HepG2 (cell line): ENCODE measurements at regions of chr7 and their contacts with region 1.

Region 1: GRCh38 chr7:130063036-130063435 is 7.3 kb upstream of the KLHDC10 start:
- DNase-seq: peak; percentile 50
- ATAC-seq: peak; percentile 43
- H3K4me3 ChIP-seq: no peak overlapping the region
- H3K27ac ChIP-seq: no peak overlapping the region
- H3K4me1 ChIP-seq: peaks cover 53% of the 10 kb centered on the region
- H3K27me3 ChIP-seq: no peaks in the 10 kb centered on the region
- CTCF ChIP-seq: peak; percentile 65
- EP300 ChIP-seq: no peak
- POLR2A ChIP-seq: no peak
- RAD21 ChIP-seq: peak; percentile 47

Region 2: DNA sequence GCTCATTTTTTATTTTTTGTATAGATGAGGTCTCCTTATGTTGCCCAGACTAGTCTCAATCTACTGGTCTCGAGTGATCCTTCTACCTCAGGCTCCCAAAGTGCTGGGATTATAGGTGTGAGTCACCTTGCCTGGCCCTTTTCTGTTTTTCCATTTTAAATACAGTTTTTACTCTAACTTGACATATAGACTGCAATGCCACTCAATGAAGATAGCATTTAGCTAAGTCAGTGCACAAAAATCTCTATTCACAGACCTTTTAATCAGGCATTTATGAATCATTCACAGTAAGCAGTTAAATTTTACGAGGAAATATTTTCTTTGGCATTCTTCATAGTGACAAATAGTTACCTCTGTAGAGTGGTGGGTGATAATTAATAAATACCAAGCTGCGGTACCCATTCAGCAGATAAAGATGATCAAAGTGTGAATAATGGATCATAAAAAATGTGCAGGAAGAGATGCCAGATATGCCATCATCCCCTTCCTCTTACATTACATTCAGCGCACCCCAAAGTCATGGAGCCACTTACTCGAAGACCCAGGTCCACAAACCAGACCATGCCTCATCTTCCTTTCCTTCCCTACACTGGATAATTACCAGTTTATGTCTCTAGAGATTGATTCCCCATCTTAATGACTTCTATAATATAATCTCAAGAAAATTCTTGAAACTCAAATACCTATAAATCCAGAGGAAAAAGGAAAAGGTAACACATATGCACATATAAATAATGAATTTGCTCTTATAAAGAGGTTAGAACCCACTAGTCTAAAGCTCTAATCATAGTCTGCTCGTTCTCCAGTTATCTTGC is 166.3 kb before region 1 on chr7:
- CTCF ChIA-PET with region 1: no interaction called
- POLR2A ChIA-PET with region 1: no interaction called
- in situ Hi-C with region 1: no loop called
- intact Hi-C with region 1: no loop called
- DNase-seq: no peak
- ATAC-seq: no peak
- H3K4me3 ChIP-seq: no peak overlapping the region
- H3K27ac ChIP-seq: no peak overlapping the region
- H3K4me1 ChIP-seq: no peaks in the 10 kb centered on the region
- H3K27me3 ChIP-seq: no peaks in the 10 kb centered on the region
- CTCF ChIP-seq: no peak
- EP300 ChIP-seq: no peak
- POLR2A ChIP-seq: no peak
- RAD21 ChIP-seq: no peak

Region 3: GRCh38 chr7:130205084-130205947 is 142.3 kb after region 1 on chr7 and contains the start of gene TMEM209:
- CTCF ChIA-PET with region 1: no interaction called
- POLR2A ChIA-PET with region 1: interaction called, 10 read pairs
- in situ Hi-C with region 1: no loop called
- intact Hi-C with region 1: no loop called
- DNase-seq: peak; percentile 96
- ATAC-seq: peak; percentile 96
- H3K4me3 ChIP-seq: peak within 1 kb of the TSS; percentile 83 to 94 (median 92)
- H3K27ac ChIP-seq: peak within 1 kb of the TSS; percentile 97
- H3K4me1 ChIP-seq: peaks cover 25% of the 10 kb centered on the region
- H3K27me3 ChIP-seq: no peaks in the 10 kb centered on the region; a peak in 1 of 5 replicates
- CTCF ChIP-seq: no peak
- EP300 ChIP-seq: peak in 1 of 2 experiments; percentile 15; a peak in 1 of 4 replicates
- POLR2A ChIP-seq: peak; percentile 92 to 95
- RAD21 ChIP-seq: no peak
- total RNA-seq, gene TMEM209: 8.8 and 14.5 TPM in 2 replicates

Region 4: GRCh38 chr7:130227883-130228575 is 165.0 kb after region 1 on chr7:
- CTCF ChIA-PET with region 1: no interaction called
- POLR2A ChIA-PET with region 1: no interaction called
- in situ Hi-C with region 1: no loop called
- intact Hi-C with region 1: no loop called
- DNase-seq: peak; percentile 53
- ATAC-seq: peak; percentile 38; the same call in 1 of the 3 replicates
- H3K4me3 ChIP-seq: peak overlapping the region in 2 of 3 experiments; percentile 4 to 31; a peak in 2 of 6 replicates
- H3K27ac ChIP-seq: peak overlapping the region; percentile 40
- H3K4me1 ChIP-seq: peaks cover 52% of the 10 kb centered on the region
- H3K27me3 ChIP-seq: no peaks in the 10 kb centered on the region
- CTCF ChIP-seq: no peak
- EP300 ChIP-seq: 0 out of 4 replicates have a peak, but pooled peaks of 1 of the 2 experiments have one; percentile 20
- POLR2A ChIP-seq: no peak
- RAD21 ChIP-seq: no peak

Region 5: DNA sequence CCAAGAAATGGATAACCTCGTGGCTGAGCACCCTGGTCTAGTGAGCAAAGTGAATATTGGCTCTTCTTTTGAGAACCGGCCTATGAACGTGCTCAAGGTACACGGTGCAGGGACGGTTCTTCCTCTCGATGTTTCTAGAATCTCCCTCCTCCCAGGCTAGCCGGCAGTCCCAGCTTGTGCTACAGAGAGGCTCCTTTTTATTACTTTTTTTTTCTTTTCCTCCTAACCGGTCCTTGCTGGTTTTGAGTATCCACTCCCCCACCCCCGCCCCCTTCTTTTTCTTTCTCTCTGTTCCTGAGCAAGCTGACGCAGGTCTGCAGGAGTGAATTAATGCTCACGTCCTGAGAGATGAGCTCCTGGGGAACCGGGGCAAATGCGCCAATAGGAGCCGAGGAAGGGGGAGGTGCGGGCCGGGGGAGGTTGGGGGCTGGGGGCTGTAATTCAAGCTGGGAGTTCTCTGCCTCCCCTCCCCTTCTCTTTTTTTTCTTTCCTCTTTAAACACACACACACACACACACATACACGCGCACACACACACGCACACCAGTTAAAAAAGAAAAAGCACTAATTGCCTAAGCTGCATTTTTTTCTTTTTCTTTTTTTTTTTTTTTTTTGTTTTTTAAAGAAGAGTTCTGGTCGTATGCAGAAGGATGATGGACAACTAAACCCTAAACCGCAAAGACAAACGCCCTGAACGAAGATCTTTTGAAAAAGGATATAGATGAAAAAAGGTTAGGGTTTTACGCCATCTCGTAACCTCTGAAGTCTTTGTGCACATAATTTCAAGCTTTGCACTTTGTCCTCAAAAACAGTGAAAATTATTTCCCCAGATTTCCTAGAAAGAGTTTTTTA is 210.3 kb after region 1 on chr7:
- CTCF ChIA-PET with region 1: no interaction called
- POLR2A ChIA-PET with region 1: no interaction called
- in situ Hi-C with region 1: no loop called
- intact Hi-C with region 1: no loop called
- DNase-seq: no peak
- ATAC-seq: no peak
- H3K4me3 ChIP-seq: no peak overlapping the region
- H3K27ac ChIP-seq: no peak overlapping the region
- H3K4me1 ChIP-seq: no peaks in the 10 kb centered on the region
- H3K27me3 ChIP-seq: peaks cover 0 to 16% of the 10 kb centered on the region in 2 experiments; a peak in 1 of 5 replicates
- CTCF ChIP-seq: no peak
- EP300 ChIP-seq: no peak
- POLR2A ChIP-seq: no peak
- RAD21 ChIP-seq: no peak